Panc1 (cell line): ENCODE measurements at regions of chr18 and their contacts with region 1.

Region 1: DNA sequence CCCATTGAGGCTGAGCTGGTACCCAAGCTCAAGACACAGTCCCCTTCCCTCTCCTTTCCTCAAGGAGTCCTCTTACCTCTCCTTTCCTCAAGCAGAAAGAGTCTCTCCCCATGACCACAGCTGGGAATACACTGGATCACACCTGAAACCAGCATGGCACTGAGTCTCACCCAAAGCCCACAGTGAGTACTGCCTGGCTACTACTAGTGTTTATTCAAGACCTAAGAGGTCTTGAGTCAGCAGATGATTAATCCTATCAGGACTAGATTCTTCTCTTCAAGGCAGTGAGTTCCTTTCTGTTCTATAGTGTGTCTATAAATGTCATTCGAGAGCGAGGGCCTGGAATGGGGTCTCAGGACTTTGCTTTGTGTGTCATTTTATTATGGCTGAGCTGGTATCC is 111.4 kb downstream of the METTL4 start:
- DNase-seq: no peak
- ATAC-seq: no peak
- H3K4me3 ChIP-seq: no peak overlapping the region
- H3K27ac ChIP-seq: no peak overlapping the region
- H3K4me1 ChIP-seq: no peaks in the 10 kb centered on the region
- H3K27me3 ChIP-seq: no peaks in the 10 kb centered on the region
- CTCF ChIP-seq: no peak

Region 2: GRCh38 chr18:2425426-2426317 is 34.2 kb before region 1 on chr18:
- CTCF ChIA-PET with region 1: no interaction called
- POLR2A ChIA-PET with region 1: no interaction called
- in situ Hi-C with region 1: no loop called
- intact Hi-C with region 1: no loop called
- DNase-seq: no peak
- ATAC-seq: no peak
- H3K4me3 ChIP-seq: no peak overlapping the region
- H3K27ac ChIP-seq: no peak overlapping the region
- H3K4me1 ChIP-seq: no peaks in the 10 kb centered on the region
- H3K27me3 ChIP-seq: no peaks in the 10 kb centered on the region
- CTCF ChIP-seq: no peak

Region 3: GRCh38 chr18:2515908-2516625 is 56.2 kb after region 1 on chr18:
- CTCF ChIA-PET with region 1: no interaction called
- POLR2A ChIA-PET with region 1: no interaction called
- in situ Hi-C with region 1: no loop called
- intact Hi-C with region 1: loop called (anchors 10 kb)
- DNase-seq: no peak
- ATAC-seq: no peak
- H3K4me3 ChIP-seq: no peak overlapping the region
- H3K27ac ChIP-seq: no peak overlapping the region
- H3K4me1 ChIP-seq: no peaks in the 10 kb centered on the region
- H3K27me3 ChIP-seq: no peaks in the 10 kb centered on the region
- CTCF ChIP-seq: no peak

Region 4: DNA sequence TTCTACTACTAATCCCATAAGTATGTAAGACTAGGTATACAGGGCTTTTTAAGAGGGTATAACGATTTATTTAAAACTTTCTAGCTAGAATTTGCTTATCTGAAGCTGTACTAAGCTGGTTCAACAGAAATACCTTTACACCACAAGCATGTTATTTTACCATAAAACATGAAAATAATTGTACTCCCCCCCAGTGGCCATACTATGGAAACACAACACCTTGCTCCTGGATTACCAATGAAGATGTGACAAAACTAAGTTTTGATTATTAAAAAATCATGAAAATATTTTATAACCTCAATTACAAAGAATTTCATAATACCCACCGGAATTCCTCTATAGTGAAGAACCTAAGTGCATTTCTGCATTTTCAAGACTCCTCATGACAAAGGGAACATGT is 525.7 kb after region 1 on chr18:
- CTCF ChIA-PET with region 1: no interaction called
- POLR2A ChIA-PET with region 1: no interaction called
- in situ Hi-C with region 1: no loop called
- intact Hi-C with region 1: no loop called
- DNase-seq: no peak
- ATAC-seq: no peak
- H3K4me3 ChIP-seq: no peak overlapping the region
- H3K27ac ChIP-seq: peak overlapping the region; percentile 96; the same call in 1 of the 2 replicates
- H3K4me1 ChIP-seq: peaks cover 45% of the 10 kb centered on the region
- H3K27me3 ChIP-seq: no peaks in the 10 kb centered on the region
- CTCF ChIP-seq: peak; percentile 31; the same call in 1 of the 2 replicates